ENCODE measurements at regions of chr11 and their contacts with region 1.

Region 1: DNA sequence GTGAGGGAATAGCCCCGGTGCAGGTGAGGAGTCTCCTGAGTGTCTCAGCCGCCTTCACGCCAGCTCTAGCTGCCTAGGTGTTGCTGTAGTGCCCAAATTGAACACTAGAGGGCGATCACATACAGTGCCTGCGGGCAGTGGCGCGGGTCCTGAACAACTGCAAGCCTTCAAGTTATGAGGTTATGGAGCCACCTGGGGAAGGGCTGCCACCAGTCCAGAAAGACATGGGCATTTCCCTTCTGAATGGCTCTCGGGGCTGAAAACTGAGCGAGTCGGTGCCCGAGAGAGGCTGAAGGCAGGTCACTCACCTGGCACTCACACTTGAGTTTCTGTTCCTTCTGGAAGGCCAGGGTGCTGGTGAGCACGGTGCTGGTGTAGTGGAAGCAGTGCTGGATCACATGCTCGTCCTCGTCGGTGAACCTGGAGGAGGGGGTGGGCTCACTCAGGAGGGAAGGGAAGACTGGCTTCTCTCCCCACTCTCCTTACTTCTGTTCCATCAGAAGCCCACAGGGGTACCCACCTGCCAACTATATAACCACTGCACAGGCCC is 88.4 kb downstream of the PDE2A start:
- DNase-seq: peak; percentile 91
- ATAC-seq: peak; percentile 95
- H3K4me3 ChIP-seq: no peak overlapping the region
- H3K27ac ChIP-seq: no peak overlapping the region
- H3K4me1 ChIP-seq: no peaks in the 10 kb centered on the region
- H3K27me3 ChIP-seq: no peaks in the 10 kb centered on the region
- CTCF ChIP-seq: peak; percentile 96

Region 2: GRCh38 chr11:72446902-72447769 is 138.7 kb before region 1 on chr11:
- CTCF ChIA-PET with region 1: no interaction called
- POLR2A ChIA-PET with region 1: no interaction called
- intact Hi-C with region 1: no loop called
- DNase-seq: peak; percentile 83
- ATAC-seq: peak; percentile 76
- H3K4me3 ChIP-seq: no peak overlapping the region
- H3K27ac ChIP-seq: no peak overlapping the region
- H3K4me1 ChIP-seq: no peaks in the 10 kb centered on the region
- H3K27me3 ChIP-seq: no peaks in the 10 kb centered on the region
- CTCF ChIP-seq: peak; percentile 95

Region 3: DNA sequence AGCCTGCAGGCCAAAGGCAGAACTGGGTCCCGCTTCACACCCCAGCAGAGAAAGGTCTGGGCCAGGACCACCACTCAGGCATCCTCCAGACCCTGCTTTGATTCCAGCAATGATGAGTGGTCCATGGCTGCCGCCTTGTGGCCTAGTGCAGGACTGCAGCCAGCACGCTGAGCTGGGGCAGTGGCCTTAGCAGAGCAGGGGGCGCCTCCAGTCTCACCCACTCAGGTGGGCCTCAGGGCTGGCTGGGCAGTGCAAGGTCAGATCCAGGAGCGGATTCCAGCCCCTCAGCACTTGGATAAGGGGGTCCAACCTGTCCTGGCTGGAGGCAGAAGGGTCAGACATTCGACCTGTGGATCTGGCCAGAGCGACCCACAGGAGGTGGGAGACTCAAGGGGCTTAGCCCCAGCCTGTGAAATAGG is 98.0 kb after region 1 on chr11:
- CTCF ChIA-PET with region 1: interaction called, 10 read pairs
- POLR2A ChIA-PET with region 1: no interaction called
- intact Hi-C with region 1: loop called (anchors 2 kb)
- DNase-seq: peak; percentile 74
- ATAC-seq: peak; percentile 45
- H3K4me3 ChIP-seq: no peak overlapping the region
- H3K27ac ChIP-seq: no peak overlapping the region
- H3K4me1 ChIP-seq: no peaks in the 10 kb centered on the region; the same call in 1 of the 2 replicates
- H3K27me3 ChIP-seq: peaks cover 9% of the 10 kb centered on the region; the same call in 1 of the 2 replicates
- CTCF ChIP-seq: peak; percentile 98

Region 4: GRCh38 chr11:72814286-72815109 is 228.7 kb after region 1 on chr11 and contains the start of gene ATG16L2:
- CTCF ChIA-PET with region 1: no interaction called
- POLR2A ChIA-PET with region 1: no interaction called
- intact Hi-C with region 1: no loop called
- DNase-seq: peak; percentile 92
- ATAC-seq: peak; percentile 73
- H3K4me3 ChIP-seq: peak within 1 kb of the TSS; percentile 79
- H3K27ac ChIP-seq: peak within 1 kb of the TSS; percentile 89
- H3K4me1 ChIP-seq: peaks cover 30% of the 10 kb centered on the region
- H3K27me3 ChIP-seq: no peaks in the 10 kb centered on the region
- CTCF ChIP-seq: no peak
- total RNA-seq, gene ATG16L2: 12.2 and 16.2 TPM in 2 replicates